HAP-1 (cell line): ENCODE measurements at regions of chr17 and their contacts with region 1.

Region 1: GRCh38 chr17:20121359-20122253 is 112.4 kb downstream of the SPECC1 start:
- DNase-seq: peak; percentile 11 to 79
- H3K4me3 ChIP-seq: no peak overlapping the region
- H3K4me1 ChIP-seq: no peaks in the 10 kb centered on the region
- H3K27me3 ChIP-seq: no peaks in the 10 kb centered on the region

Region 2: DNA sequence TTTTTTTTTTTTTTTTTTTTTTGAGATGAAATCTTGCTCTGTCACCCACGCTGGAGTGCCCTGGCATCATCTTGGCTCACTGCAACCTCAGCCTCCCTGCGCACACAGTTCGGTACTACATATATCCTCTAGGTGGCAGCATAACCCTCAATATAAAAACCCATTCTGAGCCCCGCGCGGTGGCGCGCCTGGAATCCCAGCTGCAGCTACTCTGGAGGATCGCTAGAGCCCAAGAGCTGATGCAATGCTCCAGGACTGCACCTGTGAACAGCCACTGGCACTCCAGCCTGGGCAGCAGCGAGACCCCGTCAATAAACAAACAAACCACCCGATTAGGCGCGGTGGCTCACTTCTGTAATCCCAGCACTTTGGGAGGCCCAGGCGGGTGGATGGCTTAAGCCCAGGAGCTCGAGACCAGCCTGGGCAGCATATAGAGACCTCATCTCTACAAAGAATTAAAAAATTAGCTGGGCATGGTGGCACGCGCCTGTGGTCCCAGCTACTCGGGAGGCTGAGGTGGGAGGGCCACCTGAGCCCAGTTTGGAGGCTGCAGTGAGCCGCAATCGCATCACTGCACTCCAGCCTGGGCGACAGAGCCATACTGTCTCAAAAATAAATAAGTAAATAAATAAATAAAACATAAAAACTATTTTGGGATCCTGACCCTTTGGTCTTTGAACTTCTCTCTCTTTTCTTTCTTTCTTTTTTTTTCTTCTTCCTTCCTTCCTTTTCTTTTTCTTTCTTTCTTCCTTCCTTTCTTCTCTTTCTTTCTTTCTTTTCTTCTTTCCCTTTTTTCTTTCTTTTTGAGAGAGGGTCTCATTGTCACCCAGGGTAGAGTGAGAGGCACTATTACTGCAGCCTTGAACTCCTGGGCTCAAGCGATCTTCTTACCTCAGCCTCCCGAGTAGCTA is 128.5 kb before region 1 on chr17:
- in situ Hi-C with region 1: loop called (anchors 10 kb)
- DNase-seq: peak; percentile 91 to 93
- H3K4me3 ChIP-seq: peak overlapping the region; percentile 15; the same call in 1 of the 2 replicates
- H3K4me1 ChIP-seq: peaks cover 5% of the 10 kb centered on the region
- H3K27me3 ChIP-seq: no peaks in the 10 kb centered on the region

Region 3: GRCh38 chr17:20026960-20027359 is 94.6 kb before region 1 on chr17:
- in situ Hi-C with region 1: no loop called
- DNase-seq: no peak
- H3K4me3 ChIP-seq: no peak overlapping the region
- H3K4me1 ChIP-seq: no peaks in the 10 kb centered on the region
- H3K27me3 ChIP-seq: no peaks in the 10 kb centered on the region